ENCODE measurements at regions of chr5 and their contacts with region 1.

Region 1: GRCh38 chr5:107766439-107766838 is 95.7 kb upstream of the EFNA5 start:
- DNase-seq: no peak
- H3K4me3 ChIP-seq: no peak overlapping the region
- H3K27ac ChIP-seq: no peak overlapping the region
- H3K4me1 ChIP-seq: no peaks in the 10 kb centered on the region
- CTCF ChIP-seq: no peak

Region 2: DNA sequence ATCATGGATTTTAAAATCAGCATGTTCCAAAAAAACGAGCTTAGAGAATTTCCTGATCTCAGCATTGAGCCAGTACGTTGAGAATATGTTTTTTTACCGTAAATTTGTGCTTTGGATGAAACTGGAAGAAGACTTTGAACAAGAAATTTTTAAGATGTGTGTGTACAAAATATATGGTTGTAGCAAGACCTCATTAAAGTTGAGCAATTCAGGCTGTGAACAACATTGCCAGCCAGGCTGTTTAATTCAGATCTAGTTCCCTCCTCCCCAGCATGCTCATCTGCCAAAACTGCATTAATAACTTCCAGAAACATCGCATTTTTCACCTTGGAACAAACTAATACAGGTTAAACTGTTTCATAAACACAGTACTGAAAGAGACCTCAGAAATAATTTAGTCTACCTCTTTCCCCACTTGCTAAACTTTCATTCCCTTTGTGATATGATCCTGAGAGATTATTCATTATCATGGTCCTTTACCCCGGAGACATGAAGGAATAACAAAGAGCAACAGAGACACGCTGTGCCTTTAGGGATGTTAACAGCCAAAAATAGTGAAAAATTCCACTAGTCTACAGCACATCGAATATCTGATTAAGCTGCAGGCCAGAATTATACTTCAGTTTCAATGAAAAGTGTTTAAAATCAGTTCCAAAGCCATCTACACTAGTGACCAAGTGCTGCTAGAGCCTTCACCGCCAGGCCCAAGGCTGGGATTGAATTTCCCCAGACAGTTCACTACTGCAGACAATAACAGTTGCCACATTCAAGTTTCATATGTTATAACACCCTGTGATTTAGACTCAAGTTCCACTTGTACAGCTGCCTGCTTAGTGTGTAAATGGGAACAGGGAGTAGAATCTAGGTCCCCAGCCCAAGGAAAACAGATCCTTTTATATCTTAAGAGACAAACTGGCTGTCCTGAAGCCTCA is 185.3 kb before region 1 on chr5:
- CTCF ChIA-PET with region 1: no interaction called
- POLR2A ChIA-PET with region 1: no interaction called
- intact Hi-C with region 1: no loop called
- DNase-seq: no peak
- H3K4me3 ChIP-seq: no peak overlapping the region
- H3K27ac ChIP-seq: no peak overlapping the region
- H3K4me1 ChIP-seq: peaks cover 7% of the 10 kb centered on the region
- CTCF ChIP-seq: no peak

Region 3: DNA sequence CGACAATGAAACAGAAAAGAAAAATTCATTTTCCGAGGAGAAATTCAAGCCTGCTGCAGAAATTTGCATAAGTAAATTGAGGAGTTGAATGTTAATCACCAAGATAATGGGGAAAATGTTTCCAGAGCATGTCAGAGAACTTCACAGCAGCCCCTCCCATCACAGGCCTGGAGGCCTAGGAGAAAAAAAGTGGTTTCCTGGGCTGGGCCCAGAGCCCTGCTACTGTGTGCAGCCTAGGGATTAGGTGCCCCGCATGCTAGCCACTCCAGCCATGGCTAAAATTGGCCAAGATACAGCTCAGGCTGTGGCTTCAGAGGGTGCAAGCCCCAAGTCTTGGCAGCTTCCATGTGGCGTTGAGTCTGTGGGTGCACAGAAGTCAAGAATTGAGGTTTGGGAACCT is 13.0 kb before region 1 on chr5:
- CTCF ChIA-PET with region 1: no interaction called
- POLR2A ChIA-PET with region 1: interaction called, 3 read pairs
- intact Hi-C with region 1: loop called (anchors 1 kb)
- DNase-seq: no peak
- H3K4me3 ChIP-seq: no peak overlapping the region
- H3K27ac ChIP-seq: no peak overlapping the region
- H3K4me1 ChIP-seq: no peaks in the 10 kb centered on the region
- CTCF ChIP-seq: no peak

Measured in OCI-LY7 (cell line).